K562 (cell line): ENCODE measurements at regions of chr1 and their contacts with region 1.

Region 1: GRCh38 chr1:9593492-9594465 is 5.1 kb downstream of the TMEM201 start:
- DNase-seq: peak; percentile 83 to 91 (median 88)
- ATAC-seq: peak; percentile 88
- H3K4me3 ChIP-seq: no peak overlapping the region
- H3K27ac ChIP-seq: no peak overlapping the region
- H3K4me1 ChIP-seq: peaks cover 33 to 83% of the 10 kb centered on the region in 2 experiments
- H3K27me3 ChIP-seq: no peaks in the 10 kb centered on the region
- CTCF ChIP-seq: no peak
- EP300 ChIP-seq: no peak
- POLR2A ChIP-seq: no peak
- RAD21 ChIP-seq: no peak

Region 2: GRCh38 chr1:9539165-9539828 is 54.5 kb before region 1 on chr1 and contains the start of gene SLC25A33:
- CTCF ChIA-PET with region 1: no interaction called
- POLR2A ChIA-PET with region 1: interaction called, 10 read pairs
- in situ Hi-C with region 1: no loop called
- intact Hi-C with region 1: no loop called
- DNase-seq: peak; percentile 99
- ATAC-seq: peak; percentile 97
- H3K4me3 ChIP-seq: peak within 1 kb of the TSS; percentile 87
- H3K27ac ChIP-seq: peak within 1 kb of the TSS; percentile 85
- H3K4me1 ChIP-seq: peaks cover 23 to 32% of the 10 kb centered on the region in 2 experiments
- H3K27me3 ChIP-seq: no peaks in the 10 kb centered on the region
- CTCF ChIP-seq: no peak
- EP300 ChIP-seq: peak; percentile 49
- POLR2A ChIP-seq: peak; percentile 85
- RAD21 ChIP-seq: no peak; a peak in 1 of 4 replicates
- polyA plus RNA-seq, gene SLC25A33: 3.2 to 6.4 TPM

Region 3: DNA sequence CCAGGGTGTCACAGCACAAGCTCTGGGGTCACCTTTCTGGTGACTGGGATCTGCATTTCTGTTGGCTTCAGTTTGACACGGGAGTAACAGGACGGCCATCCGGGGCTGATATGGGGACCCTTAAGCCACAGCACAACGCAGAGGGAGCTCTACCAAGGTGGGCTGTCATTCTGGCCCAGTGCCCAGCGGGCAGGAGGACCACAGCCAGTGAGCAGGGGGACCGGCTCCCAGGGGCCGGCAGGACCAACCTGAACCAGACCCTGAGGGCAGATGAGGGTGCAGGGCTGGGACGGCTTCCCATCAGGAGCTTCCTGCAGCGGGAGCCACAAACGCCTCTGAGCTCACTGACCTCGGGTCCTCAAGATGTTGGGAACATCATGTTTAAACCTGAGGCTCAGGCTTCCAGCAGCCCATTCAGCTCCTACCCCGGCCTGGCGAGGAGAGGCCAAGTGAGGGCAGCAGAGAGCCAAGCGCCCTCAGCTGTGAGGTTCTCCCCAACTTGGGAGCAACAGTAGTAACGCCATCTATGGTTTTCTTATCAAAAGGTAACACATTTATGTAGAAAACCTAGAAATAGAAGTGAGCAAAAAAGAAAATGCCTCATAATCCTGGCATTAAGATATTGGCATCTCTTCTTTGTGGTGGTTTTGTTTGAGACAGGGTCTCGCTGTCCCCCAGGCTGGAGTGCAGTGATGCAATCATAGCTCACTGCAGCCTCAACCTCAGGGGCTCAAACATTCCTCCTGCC is 21.7 kb after region 1 on chr1:
- CTCF ChIA-PET with region 1: no interaction called
- POLR2A ChIA-PET with region 1: interaction called, 14 read pairs
- in situ Hi-C with region 1: no loop called
- intact Hi-C with region 1: no loop called
- DNase-seq: peak; percentile 79 to 85 (median 82)
- ATAC-seq: peak; percentile 96
- H3K4me3 ChIP-seq: no peak overlapping the region
- H3K27ac ChIP-seq: no peak overlapping the region
- H3K4me1 ChIP-seq: peaks cover 4 to 22% of the 10 kb centered on the region in 2 experiments; a peak in 3 of 5 replicates
- H3K27me3 ChIP-seq: peaks cover 8 to 17% of the 10 kb centered on the region in 2 experiments
- CTCF ChIP-seq: peak; percentile 96 to 97 (median 96)
- EP300 ChIP-seq: peak; percentile 23; the same call in 1 of the 2 replicates
- POLR2A ChIP-seq: 0 out of 2 replicates have a peak, but pooled peaks have one; percentile 45
- RAD21 ChIP-seq: peak; percentile 57 to 75